Ascending aorta (tissue), 2 donors: ENCODE measurements at regions of chr5 and their contacts with region 1.

Region 1: GRCh38 chr5:87412630-87413342 is at the start of gene CCNH:
- DNase-seq: peak; percentile 96 to 99
- H3K4me3 ChIP-seq: peak within 1 kb of the TSS; percentile 78 to 79
- H3K27ac ChIP-seq: peak within 1 kb of the TSS; percentile 95 to 98
- H3K4me1 ChIP-seq: peaks cover 0 to 2% of the 10 kb centered on the region in 2 donors
- H3K27me3 ChIP-seq: no peaks in the 10 kb centered on the region
- CTCF ChIP-seq: no peak
- total RNA-seq, gene CCNH: 65.7 TPM

Region 2: DNA sequence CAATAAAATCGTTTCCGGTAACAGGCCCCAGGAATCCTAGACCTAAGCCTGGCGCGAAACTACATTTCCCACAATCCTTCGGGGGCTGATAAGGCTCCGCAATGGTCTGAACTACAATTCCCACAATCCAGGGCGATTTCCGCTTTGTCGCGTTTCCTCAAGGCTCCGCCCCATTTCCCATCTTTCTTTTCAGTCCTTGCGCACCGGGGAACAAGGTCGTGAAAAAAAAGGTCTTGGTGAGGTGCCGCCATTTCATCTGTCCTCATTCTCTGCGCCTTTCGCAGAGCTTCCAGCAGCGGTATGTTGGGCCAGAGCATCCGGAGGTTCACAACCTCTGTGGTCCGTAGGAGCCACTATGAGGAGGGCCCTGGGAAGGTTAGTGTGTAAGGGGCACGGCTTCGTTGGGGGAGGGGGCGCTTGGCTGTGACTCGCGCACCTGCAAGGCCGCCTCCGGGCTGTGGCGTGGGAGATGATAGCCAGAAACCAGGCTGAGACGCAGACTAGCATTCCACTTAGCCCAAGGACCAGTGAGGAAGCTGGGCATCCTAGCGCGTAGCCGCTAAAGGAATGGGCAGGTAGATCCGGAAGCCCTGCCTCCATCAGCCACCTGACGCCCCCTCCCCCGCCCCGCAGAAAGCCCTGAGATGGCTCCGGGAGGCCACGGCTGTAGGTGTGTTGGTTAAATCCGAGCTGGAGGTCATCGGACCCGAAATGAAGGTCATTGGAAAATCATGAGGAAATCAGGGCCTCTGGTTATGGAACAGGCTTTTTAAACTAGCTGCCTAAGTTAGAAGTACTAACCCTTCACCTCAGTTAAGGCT is 794.8 kb before region 1 on chr5 and contains the start of gene COX7C:
- intact Hi-C with region 1: loop called (anchors 5 kb)
- DNase-seq: peak; percentile 59 to 97
- H3K4me3 ChIP-seq: peak within 1 kb of the TSS; percentile 74 to 93
- H3K27ac ChIP-seq: peak within 1 kb of the TSS; percentile 76 to 86
- H3K4me1 ChIP-seq: peaks cover 0 to 10% of the 10 kb centered on the region in 2 donors
- H3K27me3 ChIP-seq: no peaks in the 10 kb centered on the region
- CTCF ChIP-seq: no peak
- total RNA-seq, gene COX7C: 128 TPM

Region 3: GRCh38 chr5:87121304-87122150 is 291.3 kb before region 1 on chr5:
- intact Hi-C with region 1: loop called (anchors 2 kb)
- DNase-seq: peak; percentile 10 to 78
- H3K4me3 ChIP-seq: peak overlapping the region in 1 of 2 donors; percentile 11
- H3K27ac ChIP-seq: peak overlapping the region; percentile 80 to 89
- H3K4me1 ChIP-seq: peaks cover 0 to 16% of the 10 kb centered on the region in 2 donors
- H3K27me3 ChIP-seq: no peaks in the 10 kb centered on the region
- CTCF ChIP-seq: no peak

Region 4: GRCh38 chr5:88268385-88269184 is 855.8 kb after region 1 on chr5 and contains the start of gene TMEM161B:
- intact Hi-C with region 1: loop called (anchors 10 kb)
- DNase-seq: peak; percentile 35 to 90
- H3K4me3 ChIP-seq: peak within 1 kb of the TSS; percentile 79 to 85
- H3K27ac ChIP-seq: peak within 1 kb of the TSS; percentile 66 to 79
- H3K4me1 ChIP-seq: peaks cover 0 to 10% of the 10 kb centered on the region in 2 donors
- H3K27me3 ChIP-seq: no peaks in the 10 kb centered on the region
- CTCF ChIP-seq: no peak
- total RNA-seq, gene TMEM161B: 3.7 TPM